ENCODE measurements at regions of chr20 and their contacts with region 1.

Region 1: GRCh38 chr20:37534401-37535157 is 6.9 kb upstream of the BLCAP start:
- DNase-seq: no peak

Region 2: GRCh38 chr20:36886859-36887751 is 647.5 kb before region 1 on chr20:
- intact Hi-C with region 1: no loop called
- DNase-seq: peak; percentile 90

Region 3: DNA sequence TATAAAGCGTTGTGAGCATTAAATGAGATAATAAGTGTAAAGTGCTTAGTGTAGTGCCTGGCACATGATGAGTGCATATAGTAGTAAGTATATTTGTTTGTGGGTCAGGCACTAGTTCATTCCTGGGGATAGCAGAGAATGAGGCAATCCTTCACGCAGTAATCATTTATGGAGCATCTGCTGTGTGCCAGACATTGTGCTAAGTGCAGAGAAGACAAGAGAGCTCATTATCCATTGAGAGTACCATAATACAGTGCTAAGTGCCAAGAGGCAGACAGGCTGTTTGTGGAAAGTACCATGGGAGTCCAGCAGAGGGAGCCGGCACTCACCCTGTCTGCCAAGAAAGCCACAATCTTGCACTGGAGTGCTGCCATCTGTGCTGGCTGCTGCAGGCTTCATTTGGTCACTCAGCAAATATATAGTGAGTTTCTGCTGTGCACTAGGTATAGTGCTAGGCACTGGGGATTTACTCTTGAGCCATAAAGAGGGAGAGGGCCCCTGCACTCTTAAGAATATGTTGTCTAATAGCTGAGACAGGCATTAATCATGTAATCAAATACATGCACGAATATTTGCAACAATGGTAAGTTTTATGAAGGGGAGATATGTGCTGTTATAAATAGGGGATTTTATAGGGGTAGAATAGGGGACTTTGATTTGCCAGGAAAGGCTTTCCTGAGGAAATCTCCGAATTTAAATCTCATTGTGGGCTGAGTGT is 342.3 kb before region 1 on chr20:
- intact Hi-C with region 1: loop called (anchors 2 kb)
- DNase-seq: peak; percentile 91

Region 4: DNA sequence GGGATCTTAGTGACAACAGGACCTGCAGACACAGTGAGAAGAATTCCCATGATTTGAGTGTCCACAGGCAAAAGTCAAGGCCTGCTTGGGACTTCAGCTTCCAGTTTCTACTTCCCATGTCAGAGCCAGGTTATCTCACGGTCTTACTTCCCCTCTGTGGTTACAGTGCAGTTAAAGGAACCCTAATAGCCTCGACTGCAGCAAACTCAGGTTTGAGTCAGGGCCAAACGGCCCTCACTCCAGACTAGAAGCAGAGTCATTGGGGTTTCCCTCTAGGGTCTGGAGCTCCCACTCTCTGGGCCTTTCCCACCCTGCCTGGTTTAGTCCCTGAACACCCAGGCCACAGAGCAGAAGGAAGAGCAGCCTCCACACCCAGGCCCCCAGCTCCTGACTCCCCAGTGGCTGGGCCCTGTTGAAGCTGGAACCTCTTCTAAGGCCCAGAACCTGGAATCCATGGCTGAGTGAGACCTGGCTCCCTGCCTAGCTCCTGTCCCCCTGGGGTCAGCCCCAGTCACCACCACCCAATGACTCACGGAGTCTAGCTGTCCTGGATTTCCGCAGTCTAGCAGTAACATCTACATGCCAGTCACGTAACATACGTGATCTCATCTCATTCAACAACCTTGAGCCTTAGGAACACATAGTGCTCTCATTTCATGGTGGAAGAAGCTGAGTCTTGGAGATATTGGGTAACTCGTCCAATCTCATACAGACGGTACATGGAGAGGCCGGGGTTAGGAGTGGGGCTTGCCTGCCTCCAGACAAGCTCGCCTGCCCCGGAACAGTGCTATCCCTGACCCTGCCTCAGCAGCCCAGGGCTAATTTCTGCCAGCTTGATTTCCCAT is 263.8 kb before region 1 on chr20:
- intact Hi-C with region 1: loop called (anchors 2 kb)
- DNase-seq: no peak

Region 5: GRCh38 chr20:37552415-37552814 is 17.8 kb after region 1 on chr20:
- intact Hi-C with region 1: no loop called
- DNase-seq: no peak

Measured in cardiac septum (tissue), 1 donor.